ENCODE measurements at regions of chr10 and their contacts with region 1.

Region 1: GRCh38 chr10:70363971-70364771 is 18.3 kb downstream of the LRRC20 start:
- DNase-seq: peak; percentile 74 to 85 (median 84)
- H3K4me3 ChIP-seq: peak overlapping the region in 1 of 7 experiments; percentile 60
- H3K27ac ChIP-seq: no peak overlapping the region
- H3K4me1 ChIP-seq: peaks cover 0 to 11% (median 7%) of the 10 kb centered on the region in 4 experiments
- H3K27me3 ChIP-seq: peaks cover 0 to 5% (median 0%) of the 10 kb centered on the region in 5 experiments

Region 2: DNA sequence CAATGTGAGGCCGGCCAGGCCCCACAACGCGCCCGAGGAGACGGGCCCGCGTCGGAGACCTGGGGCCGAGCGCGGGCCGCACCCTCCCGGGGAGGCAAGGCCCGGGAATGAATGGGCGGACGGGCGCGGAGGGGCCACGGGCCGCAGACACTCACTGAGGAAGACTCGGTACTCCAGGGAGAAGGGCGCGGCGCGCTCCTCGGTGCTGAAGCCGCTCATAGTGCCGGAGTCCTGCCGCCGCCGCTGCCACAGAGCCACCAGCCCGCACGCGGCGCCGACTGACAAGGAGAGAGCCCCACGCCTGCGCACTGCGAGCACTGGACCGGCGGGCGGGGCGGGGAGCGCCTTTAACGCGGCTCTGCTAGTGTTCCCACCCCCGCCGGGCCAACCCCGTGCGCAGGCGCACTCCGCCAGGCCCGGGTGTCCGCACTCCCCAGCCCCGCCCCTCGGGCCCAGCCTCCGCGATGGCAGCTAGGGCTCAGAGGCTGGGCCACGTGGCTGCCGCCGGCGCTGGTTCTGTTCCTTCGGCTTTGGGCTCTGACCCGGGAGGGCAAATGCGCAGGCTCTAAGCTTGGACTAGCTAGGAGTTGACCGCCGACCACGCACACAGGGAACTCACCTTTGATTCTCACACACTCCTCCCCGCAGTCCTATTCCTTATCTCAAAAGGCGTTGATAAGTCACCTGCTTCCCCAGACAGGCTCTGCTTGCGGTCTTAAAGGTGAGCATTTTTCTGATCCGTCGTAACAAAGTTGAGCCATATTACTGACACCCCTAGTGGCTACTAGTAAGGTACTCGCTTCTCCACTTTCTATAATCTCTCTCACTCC is 130.8 kb before region 1 on chr10 and contains the start of gene PPA1:
- CTCF ChIA-PET with region 1: interaction called, 244 read pairs
- POLR2A ChIA-PET with region 1: no interaction called
- DNase-seq: peak; percentile 95 to 97 (median 96)
- H3K4me3 ChIP-seq: peak within 1 kb of the TSS; percentile 67 to 88 (median 79)
- H3K27ac ChIP-seq: peak within 1 kb of the TSS in 1 of 2 experiments; percentile 49
- H3K4me1 ChIP-seq: peaks cover 6 to 21% (median 19%) of the 10 kb centered on the region in 4 experiments
- H3K27me3 ChIP-seq: no peaks in the 10 kb centered on the region

Region 3: DNA sequence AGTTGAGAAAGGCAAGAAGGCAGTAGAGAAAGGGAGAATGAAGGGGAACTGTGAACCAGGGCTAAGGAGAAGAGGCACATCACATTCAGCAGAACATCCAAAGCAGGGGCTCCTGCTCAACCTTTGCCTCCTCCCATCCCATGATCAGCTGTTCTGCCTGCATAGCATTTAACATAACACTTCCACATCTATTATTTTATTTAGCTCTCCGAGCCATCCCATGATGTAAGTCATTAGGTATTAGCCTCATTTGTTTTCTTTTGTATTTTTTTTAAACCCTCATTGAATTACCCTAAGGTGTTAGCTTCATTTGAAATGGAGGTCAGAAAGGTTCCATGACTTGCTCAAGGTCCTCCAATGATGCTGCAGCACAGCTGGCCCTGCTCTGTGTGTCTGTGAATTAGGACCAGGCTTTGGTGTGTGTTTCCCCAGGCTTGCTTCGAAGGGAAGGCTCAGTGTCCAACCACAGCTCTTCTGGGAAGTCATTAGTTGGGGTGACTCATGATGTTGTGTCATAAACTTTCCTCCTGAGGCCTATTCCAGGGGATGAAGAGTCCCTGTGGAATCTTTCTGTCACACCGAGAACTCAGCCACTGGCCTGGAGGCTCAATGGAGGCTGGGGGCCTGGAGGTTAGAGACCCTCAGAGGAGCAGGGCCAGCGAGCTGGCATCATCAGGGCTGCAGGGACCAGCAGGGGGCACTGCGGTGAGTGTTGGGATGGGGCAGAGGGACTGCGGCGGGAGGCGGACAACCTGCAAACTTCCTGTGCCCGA is 96.8 kb before region 1 on chr10:
- CTCF ChIA-PET with region 1: interaction called, 31 read pairs
- POLR2A ChIA-PET with region 1: no interaction called
- DNase-seq: no peak
- H3K4me3 ChIP-seq: no peak overlapping the region
- H3K27ac ChIP-seq: no peak overlapping the region
- H3K4me1 ChIP-seq: no peaks in the 10 kb centered on the region
- H3K27me3 ChIP-seq: peaks cover 0 to 20% (median 4%) of the 10 kb centered on the region in 5 experiments

Region 4: GRCh38 chr10:70341016-70341415 is 23.2 kb before region 1 on chr10:
- CTCF ChIA-PET with region 1: interaction called, 72 read pairs
- POLR2A ChIA-PET with region 1: interaction called, 3 read pairs
- DNase-seq: peak in 2 of 3 donors; percentile 56 to 67
- H3K4me3 ChIP-seq: no peak overlapping the region
- H3K27ac ChIP-seq: no peak overlapping the region
- H3K4me1 ChIP-seq: peaks cover 0 to 7% (median 3%) of the 10 kb centered on the region in 4 experiments
- H3K27me3 ChIP-seq: peaks cover 0 to 28% (median 19%) of the 10 kb centered on the region in 5 experiments

Region 5: DNA sequence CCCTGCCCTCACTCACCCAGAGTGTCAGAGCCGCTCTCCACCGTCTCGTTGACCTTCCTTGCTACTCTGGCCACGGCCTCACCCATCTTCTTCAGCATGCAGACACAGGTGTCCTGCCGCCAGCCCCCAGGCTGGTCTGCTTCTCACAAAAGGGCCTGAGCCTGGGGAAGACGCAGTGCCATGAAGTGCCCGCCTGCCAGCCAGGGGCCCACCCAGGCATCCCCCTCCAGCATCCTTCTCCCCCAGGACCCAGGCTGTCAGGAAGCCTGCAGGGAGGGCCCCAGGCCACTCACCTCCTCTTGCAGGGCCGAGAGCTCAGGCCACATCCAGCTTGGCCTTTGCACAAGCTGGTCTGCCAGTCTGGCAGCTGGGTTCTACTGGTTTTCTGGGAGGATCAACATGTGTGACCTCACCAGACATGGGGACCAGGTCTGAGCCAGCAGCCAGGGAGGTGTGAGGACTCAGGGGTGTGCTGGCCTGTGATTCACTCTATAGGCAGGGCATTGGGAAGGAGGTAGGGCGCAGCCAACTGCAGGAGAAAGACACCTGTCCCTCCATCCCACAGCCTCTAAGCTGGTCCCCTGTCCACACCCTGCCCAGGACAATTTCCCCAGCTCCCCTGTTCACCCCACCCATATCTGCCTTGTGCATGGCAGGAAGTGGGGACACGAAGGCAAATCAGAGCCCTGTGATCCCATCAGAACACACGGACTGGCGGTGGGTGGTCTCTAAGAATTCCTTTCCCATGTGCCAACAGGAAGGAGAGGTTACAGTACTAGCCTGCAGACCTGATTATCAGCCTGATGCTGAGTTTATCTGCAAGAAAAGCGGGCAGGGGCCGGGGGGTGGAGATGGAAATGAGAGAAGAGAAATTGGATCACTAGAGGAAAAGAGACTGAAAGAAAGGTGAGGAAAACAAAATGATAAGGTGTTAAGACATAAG is 12.5 kb after region 1 on chr10:
- CTCF ChIA-PET with region 1: interaction called, 22 read pairs
- POLR2A ChIA-PET with region 1: no interaction called
- DNase-seq: no peak
- H3K4me3 ChIP-seq: no peak overlapping the region
- H3K27ac ChIP-seq: no peak overlapping the region
- H3K4me1 ChIP-seq: peaks cover 0 to 7% (median 5%) of the 10 kb centered on the region in 4 experiments
- H3K27me3 ChIP-seq: peaks cover 0 to 6% (median 0%) of the 10 kb centered on the region in 5 experiments

Region 6: GRCh38 chr10:70508912-70509756 is 145.0 kb after region 1 on chr10:
- CTCF ChIA-PET with region 1: no interaction called
- POLR2A ChIA-PET with region 1: no interaction called
- DNase-seq: peak; percentile 40 to 95 (median 89)
- H3K4me3 ChIP-seq: peak overlapping the region in 3 of 7 experiments; percentile 20 to 52 (median 51)
- H3K27ac ChIP-seq: no peak overlapping the region
- H3K4me1 ChIP-seq: peaks cover 4 to 47% (median 29%) of the 10 kb centered on the region in 4 experiments
- H3K27me3 ChIP-seq: no peaks in the 10 kb centered on the region